ENCODE measurements at regions of chr16 and their contacts with region 1.

Region 1: GRCh38 chr16:24041826-24042631 is 206.2 kb downstream of the PRKCB start:
- DNase-seq: peak; percentile 81
- CTCF ChIP-seq: peak; percentile 71

Region 2: DNA sequence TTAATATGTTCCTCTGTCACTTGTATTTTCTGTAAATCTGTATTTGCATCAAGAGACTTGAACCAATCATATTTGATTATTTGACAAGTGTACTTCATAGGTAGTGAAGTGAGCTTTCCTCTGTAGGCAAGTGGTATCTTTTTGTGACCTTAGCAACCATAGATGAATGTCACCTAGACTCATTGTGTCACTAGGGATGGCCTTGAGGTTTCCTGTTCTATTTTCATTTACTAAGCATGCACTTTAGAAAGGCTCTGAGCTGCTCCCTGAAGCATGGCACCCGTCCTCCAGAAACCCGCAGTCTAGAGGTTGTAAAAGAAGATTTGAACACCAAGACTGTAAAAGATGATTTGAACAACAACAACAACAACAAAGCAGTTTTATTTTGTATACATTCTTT is 54.6 kb before region 1 on chr16:
- in situ Hi-C with region 1: no loop called
- DNase-seq: peak; percentile 55
- CTCF ChIP-seq: no peak

Region 3: GRCh38 chr16:24504472-24505345 is 462.7 kb after region 1 on chr16:
- in situ Hi-C with region 1: loop called (anchors 10 kb)
- DNase-seq: peak; percentile 68
- CTCF ChIP-seq: peak; percentile 77